Left cardiac atrium (tissue), 4 donors: ENCODE measurements at regions of chr3 and their contacts with region 1.

Region 1: DNA sequence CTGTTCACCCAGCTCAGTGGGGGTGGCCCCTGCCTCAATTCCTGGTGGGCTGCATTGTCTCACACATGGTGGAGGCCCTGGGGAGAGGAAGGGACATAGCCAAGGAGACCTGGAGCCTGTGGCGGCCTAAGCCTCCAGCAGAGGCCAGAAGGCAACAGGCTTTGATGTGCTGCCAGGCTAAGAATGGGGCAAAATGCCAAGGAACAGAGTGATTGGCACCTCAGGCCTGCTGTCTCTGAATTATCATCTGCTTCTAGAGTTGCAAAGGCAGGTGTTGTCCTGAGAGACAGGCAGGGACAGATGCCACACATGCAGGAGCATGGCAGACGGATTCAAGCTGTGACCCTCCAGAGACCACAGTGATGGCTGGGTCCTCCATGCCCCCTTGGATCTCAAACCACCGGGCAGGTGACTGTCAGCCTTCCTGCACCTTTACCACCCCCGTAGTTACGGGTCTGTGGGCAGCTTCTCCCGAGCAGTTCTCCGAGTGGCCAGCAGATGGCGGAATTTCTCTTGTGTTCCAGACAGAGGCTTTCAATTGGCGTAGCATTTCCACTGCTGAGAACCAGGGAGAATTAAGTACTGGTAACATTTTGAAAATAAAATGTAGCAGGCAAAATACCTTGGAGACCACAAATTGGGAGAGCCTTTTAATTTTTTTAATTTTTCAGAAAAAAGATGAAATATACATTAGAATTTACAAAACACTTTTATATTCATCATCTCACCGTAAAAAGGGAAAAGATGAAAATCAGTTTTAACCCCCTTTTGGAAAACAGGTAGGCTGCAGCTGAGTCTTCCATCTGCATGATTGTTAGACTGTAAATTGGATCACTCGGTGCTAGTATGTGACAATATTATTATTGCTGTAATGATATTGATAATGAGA is 525.5 kb upstream of the CFAP20DC start:
- DNase-seq: peak; percentile 83
- ATAC-seq: peak; percentile 76 to 88

Region 2: GRCh38 chr3:59212128-59212779 is 363.1 kb before region 1 on chr3:
- intact Hi-C with region 1: loop called in 1 of 2 experiments (anchors 10 kb)
- DNase-seq: no peak
- ATAC-seq: peak; percentile 61 to 78

Region 3: DNA sequence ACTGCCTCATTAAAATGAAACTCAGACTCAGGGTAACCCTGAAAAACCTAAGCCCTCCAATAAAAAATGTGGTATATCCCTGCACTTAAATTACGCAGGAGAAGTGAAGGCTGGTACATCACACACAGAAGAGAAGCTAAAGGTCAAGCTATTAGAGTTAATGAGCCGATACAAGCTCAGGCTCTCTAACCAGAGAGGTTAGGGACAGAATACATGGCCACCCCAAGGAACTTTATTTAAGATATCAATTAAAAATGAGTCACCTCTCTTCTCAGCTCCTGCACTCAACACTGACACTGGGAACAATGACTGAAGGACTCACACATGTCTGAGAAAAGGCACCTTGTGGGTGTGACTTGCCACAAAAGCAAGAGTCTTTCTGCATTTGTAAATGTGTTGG is 275.1 kb after region 1 on chr3:
- intact Hi-C with region 1: loop called in 1 of 2 experiments (anchors 5 kb)
- DNase-seq: no peak
- ATAC-seq: no peak

Region 4: GRCh38 chr3:59857589-59858346 is 282.4 kb after region 1 on chr3:
- intact Hi-C with region 1: loop called (anchors 2 to 5 kb)
- DNase-seq: peak; percentile 85
- ATAC-seq: peak; percentile 92 to 95